GM23248 (cell line): ENCODE measurements at regions of chr3 and their contacts with region 1.

Region 1: DNA sequence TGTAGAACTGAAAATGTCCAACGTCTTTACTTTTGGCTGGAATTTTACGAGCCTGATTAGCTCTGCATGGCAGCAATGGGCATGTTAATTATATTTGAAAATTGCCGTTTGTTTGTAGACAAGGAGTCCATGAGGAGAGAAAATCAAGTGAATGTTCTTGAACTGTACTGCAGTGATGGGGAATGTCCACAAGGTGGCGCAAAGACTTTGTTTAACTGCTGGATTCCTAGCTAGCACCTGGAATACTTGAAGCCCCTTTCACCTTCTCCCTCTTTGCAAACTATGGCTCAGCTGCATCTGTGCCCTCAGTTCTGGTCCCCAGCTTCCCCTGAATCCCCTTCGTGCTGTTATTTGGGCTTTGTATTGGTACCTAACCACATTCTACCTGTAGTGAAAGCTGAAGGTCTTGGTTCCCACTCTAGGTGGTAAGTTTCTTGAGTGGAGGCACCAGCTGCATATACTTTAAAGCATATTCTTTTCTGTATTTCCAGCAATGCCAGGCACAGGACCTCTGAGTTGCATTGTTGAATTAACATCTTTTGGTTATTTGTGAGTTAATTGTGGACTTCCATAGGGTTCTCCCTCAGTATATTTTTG is 25.3 kb downstream of the EXOG start:
- DNase-seq: peak; percentile 63
- H3K4me3 ChIP-seq: no peak overlapping the region
- H3K27ac ChIP-seq: no peak overlapping the region
- H3K4me1 ChIP-seq: peaks cover 10% of the 10 kb centered on the region
- H3K27me3 ChIP-seq: no peaks in the 10 kb centered on the region

Region 2: DNA sequence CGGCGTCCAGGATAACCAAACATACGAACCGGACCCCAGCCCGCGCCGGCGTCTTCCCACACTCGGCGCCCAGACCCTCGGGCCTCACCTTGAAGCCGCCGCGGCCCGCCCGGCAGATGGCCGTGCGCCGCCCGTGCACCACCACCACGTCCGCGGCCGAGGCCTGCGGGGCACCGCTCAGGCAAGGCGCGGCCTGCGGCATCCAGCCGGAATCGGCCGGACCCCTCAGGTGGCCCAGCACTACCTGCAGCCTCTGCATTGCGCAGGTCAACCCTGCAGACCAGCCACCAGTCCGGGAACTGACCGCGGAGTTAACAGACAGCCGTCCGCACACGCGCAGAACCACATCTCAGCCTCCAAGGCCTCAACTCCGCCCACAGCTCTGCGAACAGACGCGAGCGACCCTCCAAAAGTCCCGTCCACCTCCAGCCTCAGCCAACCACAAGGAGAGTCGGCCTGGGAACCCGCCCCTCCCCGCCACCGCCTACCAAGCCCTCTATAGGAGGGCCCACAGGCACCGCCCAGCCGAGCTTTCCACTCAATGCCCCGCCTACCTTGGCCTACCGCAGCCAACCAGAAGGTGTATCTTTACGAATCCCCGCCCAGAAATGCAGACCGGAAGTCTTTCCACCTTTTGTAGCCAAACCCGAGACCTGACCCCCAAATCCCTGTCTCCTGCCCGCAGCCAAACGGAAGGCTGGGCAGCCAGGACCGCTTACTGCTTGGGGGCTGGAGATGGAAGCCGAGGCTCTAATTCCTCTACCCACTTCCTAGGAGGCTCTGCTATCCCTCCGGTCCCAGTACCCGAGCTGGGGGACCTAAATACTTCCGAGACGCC is 384.5 kb before region 1 on chr3 and contains the start of gene ACAA1:
- in situ Hi-C with region 1: no loop called
- DNase-seq: peak; percentile 100
- H3K4me3 ChIP-seq: peak within 1 kb of the TSS; percentile 90
- H3K27ac ChIP-seq: peak within 1 kb of the TSS; percentile 77
- H3K4me1 ChIP-seq: peaks cover 15% of the 10 kb centered on the region; the same call in 1 of the 2 replicates
- H3K27me3 ChIP-seq: no peaks in the 10 kb centered on the region
- total RNA-seq, gene ACAA1: 18.7 and 32.9 TPM in 2 replicates

Region 3: DNA sequence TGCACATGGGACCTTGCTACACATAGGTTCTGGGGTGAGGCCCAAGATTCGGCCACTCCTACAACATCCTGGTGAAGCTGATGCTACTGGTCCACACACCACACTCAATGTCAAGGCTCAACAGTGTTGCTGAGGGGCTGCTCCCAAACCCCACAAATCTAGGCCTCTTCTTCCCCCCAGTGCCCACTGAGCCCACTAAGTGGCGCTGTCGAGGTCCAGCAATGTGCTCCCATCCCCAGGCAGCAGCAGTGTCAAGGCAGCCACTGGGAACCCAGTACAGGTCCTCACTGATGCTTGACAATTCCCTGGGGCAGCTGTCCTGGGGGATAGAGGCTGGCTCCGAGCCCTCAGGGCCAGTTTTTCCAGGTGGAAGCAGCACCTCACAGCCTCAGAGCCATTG is 106.5 kb after region 1 on chr3:
- in situ Hi-C with region 1: no loop called
- DNase-seq: peak; percentile 35
- H3K4me3 ChIP-seq: no peak overlapping the region
- H3K27ac ChIP-seq: no peak overlapping the region
- H3K4me1 ChIP-seq: no peaks in the 10 kb centered on the region
- H3K27me3 ChIP-seq: peaks cover 17% of the 10 kb centered on the region; the same call in 1 of the 2 replicates

Region 4: DNA sequence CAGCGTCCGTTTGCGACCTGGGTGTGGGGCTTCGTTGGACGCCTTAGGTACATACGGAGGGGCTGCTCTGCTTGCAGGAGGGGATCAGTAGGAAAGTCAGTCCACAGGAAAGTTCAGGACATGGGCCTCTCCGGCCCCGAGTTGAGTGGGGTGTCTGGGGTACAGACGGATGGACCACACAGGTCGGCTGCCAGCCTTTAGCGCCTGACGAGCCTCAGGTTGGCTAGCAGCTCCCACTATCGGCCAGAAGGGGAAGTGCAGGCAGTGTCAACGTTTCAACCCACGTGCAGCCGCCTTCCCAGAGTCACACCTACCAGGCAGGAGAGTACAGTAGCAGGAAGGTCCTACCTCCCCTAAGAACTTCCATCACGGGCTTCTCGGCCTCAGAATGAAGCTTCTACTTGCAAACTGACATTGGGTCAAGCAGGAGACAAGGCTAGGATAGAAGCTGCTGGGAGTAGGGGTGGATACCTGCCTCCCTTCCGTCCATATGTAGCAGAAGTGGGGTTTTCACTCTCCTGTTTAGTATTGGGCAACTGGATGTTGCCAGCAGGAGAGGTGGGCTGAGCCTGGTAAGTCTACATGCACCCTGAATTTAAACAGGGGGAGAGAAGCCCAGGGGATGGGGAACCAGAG is 129.8 kb after region 1 on chr3:
- in situ Hi-C with region 1: loop called (anchors 10 kb)
- DNase-seq: peak; percentile 74
- H3K4me3 ChIP-seq: no peak overlapping the region
- H3K27ac ChIP-seq: no peak overlapping the region
- H3K4me1 ChIP-seq: no peaks in the 10 kb centered on the region
- H3K27me3 ChIP-seq: peaks cover 57% of the 10 kb centered on the region

Region 5: DNA sequence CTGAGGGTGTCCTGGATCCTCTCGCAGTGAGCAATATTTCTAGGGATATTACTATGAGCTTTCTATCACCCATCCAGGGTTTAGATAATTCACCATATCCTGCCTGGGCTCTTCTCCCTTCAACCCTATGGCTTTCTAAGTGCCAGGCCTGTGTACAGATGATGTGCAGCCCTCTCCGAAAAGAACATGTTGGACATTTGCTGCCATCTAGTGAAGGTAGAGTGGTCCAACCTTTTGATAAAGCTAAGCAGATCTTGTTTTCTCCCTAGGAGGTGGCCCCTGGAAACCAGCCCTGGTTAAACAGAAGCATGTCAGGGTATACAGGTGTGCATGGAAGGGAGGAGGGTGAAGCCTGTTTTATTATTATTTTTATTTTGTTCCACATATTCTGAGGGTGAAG is 322.4 kb after region 1 on chr3:
- in situ Hi-C with region 1: loop called (anchors 10 kb)
- DNase-seq: peak; percentile 68
- H3K4me3 ChIP-seq: no peak overlapping the region
- H3K27ac ChIP-seq: no peak overlapping the region
- H3K4me1 ChIP-seq: no peaks in the 10 kb centered on the region
- H3K27me3 ChIP-seq: peaks cover 16% of the 10 kb centered on the region

Region 6: GRCh38 chr3:38992117-38992760 is 470.8 kb after region 1 on chr3:
- in situ Hi-C with region 1: loop called (anchors 10 kb)
- DNase-seq: peak; percentile 82
- H3K4me3 ChIP-seq: no peak overlapping the region
- H3K27ac ChIP-seq: peak overlapping the region; percentile 34
- H3K4me1 ChIP-seq: peaks cover 34% of the 10 kb centered on the region
- H3K27me3 ChIP-seq: no peaks in the 10 kb centered on the region